ENCODE measurements at regions of chr12 and their contacts with region 1.

Region 1: GRCh38 chr12:96516472-96517430 is 27.4 kb downstream of the CFAP54 start:
- DNase-seq: peak; percentile 79
- H3K4me3 ChIP-seq: peak overlapping the region; percentile 24
- H3K27ac ChIP-seq: peak overlapping the region; percentile 3; the same call in 1 of the 2 replicates
- H3K4me1 ChIP-seq: peaks cover 15% of the 10 kb centered on the region
- H3K27me3 ChIP-seq: no peaks in the 10 kb centered on the region

Region 2: DNA sequence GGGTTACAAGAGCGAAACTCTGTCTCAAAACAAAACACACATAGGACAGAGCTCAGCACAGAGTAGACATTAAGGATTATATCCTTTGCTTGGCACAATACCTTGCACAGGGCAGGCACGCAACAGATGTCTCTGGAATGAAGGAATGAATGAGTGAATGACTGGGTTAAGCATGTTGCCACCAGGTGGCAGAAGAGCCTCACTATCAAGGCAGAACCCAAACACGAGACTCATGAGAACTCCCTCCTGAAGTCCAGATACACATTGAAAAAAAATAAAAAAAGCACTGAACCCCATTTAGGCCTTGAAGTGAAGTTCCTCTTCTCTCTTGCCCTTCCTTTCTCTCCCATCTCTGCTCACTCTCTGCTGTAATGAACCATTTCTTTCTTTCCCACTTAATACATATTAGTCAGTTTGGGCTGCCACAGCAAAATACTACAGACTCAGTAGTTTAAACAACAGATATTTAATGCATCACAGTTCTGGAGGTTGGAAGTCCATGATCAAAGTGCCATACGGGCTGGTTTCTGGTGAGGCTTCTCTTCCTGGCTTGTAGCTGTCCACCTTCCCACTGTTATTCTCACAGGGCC is 454.8 kb before region 1 on chr12:
- in situ Hi-C with region 1: loop called (anchors 10 kb)
- DNase-seq: peak; percentile 92
- H3K4me3 ChIP-seq: no peak overlapping the region
- H3K27ac ChIP-seq: no peak overlapping the region
- H3K4me1 ChIP-seq: no peaks in the 10 kb centered on the region
- H3K27me3 ChIP-seq: no peaks in the 10 kb centered on the region

Region 3: GRCh38 chr12:96219698-96220206 is 297.0 kb before region 1 on chr12:
- in situ Hi-C with region 1: loop called (anchors 25 kb)
- DNase-seq: peak; percentile 100
- H3K4me3 ChIP-seq: peak overlapping the region; percentile 52
- H3K27ac ChIP-seq: peak overlapping the region; percentile 93
- H3K4me1 ChIP-seq: peaks cover 25% of the 10 kb centered on the region
- H3K27me3 ChIP-seq: no peaks in the 10 kb centered on the region

Region 4: GRCh38 chr12:96343347-96343954 is 173.3 kb before region 1 on chr12:
- in situ Hi-C with region 1: no loop called
- DNase-seq: peak; percentile 23
- H3K4me3 ChIP-seq: no peak overlapping the region
- H3K27ac ChIP-seq: no peak overlapping the region
- H3K4me1 ChIP-seq: peaks cover 7% of the 10 kb centered on the region
- H3K27me3 ChIP-seq: no peaks in the 10 kb centered on the region

Measured in GM23248 (cell line).